Activated T-helper 1 cell treated with anti-CD3 and anti-CD28 coated beads, Interleukin-12 subunit alpha, Interleukin-12 subunit beta, Interleukin-2, Interleukin-4 antibody, amounts not matched to agents 30 ng/mL and 10 ng/mL and 1 ng/mL, durations not matched to agents 14 hours and 24 hours and 36 hours (primary cell): ENCODE measurements at regions of chr1 and their contacts with region 1.

Region 1: DNA sequence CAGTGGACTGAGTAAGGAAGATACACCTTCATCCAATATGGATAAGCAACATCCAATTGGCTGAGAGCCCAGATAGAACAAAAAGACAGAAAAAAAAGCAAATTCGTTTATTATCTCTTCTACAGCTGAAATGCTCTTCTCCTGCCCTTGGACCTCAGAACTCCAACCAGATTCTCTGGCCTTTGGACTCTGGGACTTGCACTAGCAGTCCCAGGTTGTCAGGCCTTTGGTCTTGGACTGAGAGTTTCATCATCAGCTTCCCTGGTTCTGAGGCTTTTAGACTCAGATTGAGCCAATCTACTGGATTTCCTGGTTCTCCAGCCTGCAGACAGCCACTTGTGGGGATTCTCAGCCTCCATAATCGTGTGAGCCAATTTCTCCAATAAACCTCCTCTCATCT is 926.8 kb downstream of the PLA2G4A start:
- DNase-seq: no peak
- H3K4me3 Mint-ChIP-seq: no peak overlapping the region
- H3K27ac Mint-ChIP-seq: no peak overlapping the region
- H3K4me1 Mint-ChIP-seq: no peaks in the 10 kb centered on the region
- H3K27me3 Mint-ChIP-seq: no peaks in the 10 kb centered on the region

Region 2: GRCh38 chr1:187714470-187714869 is 41.1 kb before region 1 on chr1:
- intact Hi-C with region 1: no loop called
- DNase-seq: no peak
- H3K4me3 Mint-ChIP-seq: no peak overlapping the region
- H3K27ac Mint-ChIP-seq: no peak overlapping the region
- H3K4me1 Mint-ChIP-seq: no peaks in the 10 kb centered on the region
- H3K27me3 Mint-ChIP-seq: no peaks in the 10 kb centered on the region

Region 3: GRCh38 chr1:187744665-187745064 is 10.9 kb before region 1 on chr1:
- intact Hi-C with region 1: loop called (anchors 1 kb)
- DNase-seq: no peak
- H3K4me3 Mint-ChIP-seq: no peak overlapping the region
- H3K27ac Mint-ChIP-seq: no peak overlapping the region
- H3K4me1 Mint-ChIP-seq: no peaks in the 10 kb centered on the region
- H3K27me3 Mint-ChIP-seq: no peaks in the 10 kb centered on the region

Region 4: GRCh38 chr1:187871177-187871845 is 115.8 kb after region 1 on chr1:
- intact Hi-C with region 1: no loop called
- DNase-seq: no peak
- H3K4me3 Mint-ChIP-seq: no peak overlapping the region
- H3K27ac Mint-ChIP-seq: no peak overlapping the region
- H3K4me1 Mint-ChIP-seq: no peaks in the 10 kb centered on the region
- H3K27me3 Mint-ChIP-seq: no peaks in the 10 kb centered on the region